ENCODE measurements at regions of chr1 and their contacts with region 1.

Region 1: GRCh38 chr1:179706339-179706941 is 36.7 kb upstream of the FAM163A start:
- DNase-seq: peak; percentile 56
- H3K4me3 ChIP-seq: no peak overlapping the region; a peak in 1 of 4 replicates
- H3K27ac ChIP-seq: peak overlapping the region in 1 of 2 experiments; percentile 39; a peak in 1 of 4 replicates
- H3K4me1 ChIP-seq: peaks cover 0 to 23% of the 10 kb centered on the region in 2 experiments; a peak in 2 of 4 replicates
- H3K27me3 ChIP-seq: no peaks in the 10 kb centered on the region
- CTCF ChIP-seq: peak; percentile 96
- EP300 ChIP-seq: no peak
- RAD21 ChIP-seq: peak; percentile 99

Region 2: GRCh38 chr1:179677898-179678297 is 28.5 kb before region 1 on chr1:
- CTCF ChIA-PET with region 1: no interaction called
- POLR2A ChIA-PET with region 1: no interaction called
- DNase-seq: no peak
- H3K4me3 ChIP-seq: no peak overlapping the region
- H3K27ac ChIP-seq: no peak overlapping the region
- H3K4me1 ChIP-seq: no peaks in the 10 kb centered on the region
- H3K27me3 ChIP-seq: no peaks in the 10 kb centered on the region
- CTCF ChIP-seq: no peak
- EP300 ChIP-seq: no peak
- RAD21 ChIP-seq: no peak

Region 3: DNA sequence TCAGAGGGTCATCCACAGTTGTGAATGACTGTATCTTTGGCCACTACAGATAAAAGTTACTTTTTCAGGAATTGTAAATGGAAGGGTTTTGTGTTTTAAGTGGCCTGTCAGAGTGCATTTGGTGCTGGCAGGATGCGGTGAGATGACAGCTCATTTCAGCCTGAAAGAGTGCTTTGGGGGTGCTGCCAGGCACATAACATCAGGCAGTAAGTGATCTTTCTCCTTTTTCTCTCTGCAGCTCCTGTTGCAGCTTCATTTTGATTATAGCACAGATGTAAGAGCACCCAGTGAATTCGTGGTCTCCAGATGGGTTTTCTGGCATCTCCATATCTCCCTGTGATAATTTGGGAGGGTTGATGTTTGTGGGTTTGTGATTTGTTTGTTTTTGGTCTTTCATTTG is 21.8 kb after region 1 on chr1:
- CTCF ChIA-PET with region 1: interaction called, 32 read pairs
- POLR2A ChIA-PET with region 1: no interaction called
- DNase-seq: peak; percentile 22
- H3K4me3 ChIP-seq: no peak overlapping the region
- H3K27ac ChIP-seq: peak overlapping the region in 1 of 2 experiments; percentile 32; a peak in 2 of 4 replicates
- H3K4me1 ChIP-seq: peaks cover 0 to 11% of the 10 kb centered on the region in 2 experiments; a peak in 1 of 4 replicates
- H3K27me3 ChIP-seq: peaks cover 11% of the 10 kb centered on the region; the same call in 1 of the 2 replicates
- CTCF ChIP-seq: no peak
- EP300 ChIP-seq: peak in 1 of 2 experiments; percentile 53; a peak in 2 of 4 replicates
- RAD21 ChIP-seq: no peak

Region 4: GRCh38 chr1:179761296-179761695 is 54.9 kb after region 1 on chr1:
- CTCF ChIA-PET with region 1: interaction called, 14 read pairs
- POLR2A ChIA-PET with region 1: no interaction called
- DNase-seq: peak; percentile 40
- H3K4me3 ChIP-seq: no peak overlapping the region
- H3K27ac ChIP-seq: peak overlapping the region in 1 of 2 experiments; percentile 96; a peak in 3 of 4 replicates
- H3K4me1 ChIP-seq: peaks cover 0 to 83% of the 10 kb centered on the region in 2 experiments; a peak in 2 of 4 replicates
- H3K27me3 ChIP-seq: no peaks in the 10 kb centered on the region
- CTCF ChIP-seq: no peak
- EP300 ChIP-seq: peak in 1 of 2 experiments; percentile 72; a peak in 1 of 4 replicates
- RAD21 ChIP-seq: peak; percentile 2; the same call in 1 of the 2 replicates

Region 5: GRCh38 chr1:179781962-179782361 is 75.5 kb after region 1 on chr1:
- CTCF ChIA-PET with region 1: interaction called, 31 read pairs
- POLR2A ChIA-PET with region 1: interaction called, 13 read pairs
- DNase-seq: peak; percentile 83
- H3K4me3 ChIP-seq: no peak overlapping the region
- H3K27ac ChIP-seq: peak overlapping the region in 1 of 2 experiments; percentile 94; a peak in 2 of 4 replicates
- H3K4me1 ChIP-seq: peaks cover 0 to 82% of the 10 kb centered on the region in 2 experiments; a peak in 2 of 4 replicates
- H3K27me3 ChIP-seq: peaks cover 16% of the 10 kb centered on the region; the same call in 1 of the 2 replicates
- CTCF ChIP-seq: no peak
- EP300 ChIP-seq: peak in 1 of 2 experiments; percentile 100; a peak in 2 of 4 replicates
- RAD21 ChIP-seq: peak; percentile 53

Region 6: DNA sequence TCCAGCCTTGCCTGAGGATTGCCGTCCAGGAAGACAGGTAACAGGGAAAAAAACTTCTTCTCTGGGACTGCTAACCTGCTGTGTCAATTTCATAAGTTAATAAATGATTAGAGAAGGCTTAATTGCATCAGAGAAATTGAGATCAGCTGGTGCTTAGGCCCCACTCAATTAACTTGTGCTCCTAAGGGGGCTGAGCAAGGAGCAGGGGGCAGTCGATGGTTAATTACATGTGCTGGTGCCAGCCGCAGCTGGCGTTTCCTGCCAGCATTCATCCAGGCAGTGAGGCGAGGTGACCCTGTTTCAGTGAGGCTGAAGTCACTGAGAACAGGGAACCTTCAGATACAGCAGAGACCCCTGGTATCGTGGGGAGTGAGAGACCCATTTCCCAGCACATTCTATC is 96.7 kb after region 1 on chr1:
- CTCF ChIA-PET with region 1: interaction called, 862 read pairs
- POLR2A ChIA-PET with region 1: interaction called, 5 read pairs
- DNase-seq: peak; percentile 40
- H3K4me3 ChIP-seq: no peak overlapping the region
- H3K27ac ChIP-seq: peak overlapping the region in 1 of 2 experiments; percentile 53; a peak in 1 of 4 replicates
- H3K4me1 ChIP-seq: peaks cover 0 to 55% of the 10 kb centered on the region in 2 experiments; a peak in 1 of 4 replicates
- H3K27me3 ChIP-seq: no peaks in the 10 kb centered on the region; the same call in 1 of the 2 replicates
- CTCF ChIP-seq: no peak
- EP300 ChIP-seq: no peak
- RAD21 ChIP-seq: no peak

Region 7: DNA sequence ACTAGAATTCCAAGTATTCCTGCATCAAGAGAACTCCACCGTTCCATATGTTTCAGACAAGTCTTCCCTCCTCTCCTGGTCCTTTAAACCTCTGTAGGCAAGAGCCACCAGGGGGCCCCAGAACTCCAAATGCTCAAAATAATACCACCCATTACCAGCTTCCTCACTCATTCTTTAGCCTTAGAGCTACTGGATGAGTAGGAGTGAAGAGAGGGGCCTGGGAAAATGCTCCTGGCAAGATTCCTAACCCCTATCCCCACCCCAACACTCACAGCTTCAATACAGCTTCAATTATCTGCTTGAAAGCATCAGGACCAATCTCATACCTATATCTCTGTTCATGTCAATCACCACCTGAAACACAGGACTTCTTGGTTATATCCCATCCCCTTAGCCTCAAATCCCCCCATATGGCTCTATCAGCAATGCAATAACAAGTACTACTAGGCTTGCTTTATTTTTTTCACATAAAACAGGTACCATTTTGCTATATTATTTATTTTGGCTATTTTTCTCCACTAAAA is 161.4 kb after region 1 on chr1:
- CTCF ChIA-PET with region 1: interaction called, 11 read pairs
- POLR2A ChIA-PET with region 1: no interaction called
- DNase-seq: peak; percentile 63
- H3K4me3 ChIP-seq: no peak overlapping the region
- H3K27ac ChIP-seq: no peak overlapping the region
- H3K4me1 ChIP-seq: peaks cover 0 to 4% of the 10 kb centered on the region in 2 experiments; a peak in 3 of 4 replicates
- H3K27me3 ChIP-seq: no peaks in the 10 kb centered on the region
- CTCF ChIP-seq: peak; percentile 82
- EP300 ChIP-seq: no peak
- RAD21 ChIP-seq: peak; percentile 65